ENCODE measurements at regions of chr11 and their contacts with region 1.

Region 1: DNA sequence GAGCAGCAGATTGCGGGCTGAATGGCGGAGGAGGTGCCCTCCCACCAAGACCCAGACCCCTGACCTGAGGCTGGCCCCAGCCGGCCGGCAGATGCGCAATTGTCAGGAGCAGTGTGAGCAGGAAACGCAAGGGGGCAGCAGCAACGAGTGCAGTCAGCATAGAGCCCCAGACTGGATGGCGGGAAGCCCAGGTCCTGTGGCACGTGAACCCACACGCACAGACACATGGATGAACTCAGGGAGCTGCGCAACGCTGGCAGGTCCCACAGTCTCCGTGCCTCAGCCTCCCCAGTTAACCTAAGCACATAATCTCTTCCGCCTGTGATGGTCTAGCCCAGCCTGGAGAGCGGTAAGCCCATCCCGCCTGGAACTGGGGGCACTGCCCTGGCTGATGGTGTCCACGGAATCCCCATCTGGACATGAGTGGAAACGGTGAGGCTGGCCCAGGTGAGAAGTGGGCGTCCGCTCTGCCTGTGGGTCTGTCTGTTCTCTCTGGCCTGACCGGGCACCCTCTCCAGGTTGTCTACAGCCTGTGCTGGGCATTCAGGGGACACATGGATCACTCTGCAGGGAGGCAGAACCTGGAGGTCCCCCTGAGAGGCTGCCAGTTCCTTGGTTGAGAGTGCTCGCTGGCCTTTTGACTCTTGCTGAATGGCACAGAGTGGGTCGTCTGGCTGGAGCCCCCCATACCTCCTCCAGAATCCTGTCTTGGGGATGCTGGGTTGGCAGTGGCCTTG is 626 bp upstream of the TBX10 start:
- DNase-seq: peak; percentile 50
- H3K4me3 Mint-ChIP-seq: no peak overlapping the region
- H3K27ac Mint-ChIP-seq: no peak overlapping the region
- H3K4me1 Mint-ChIP-seq: peaks cover 6% of the 10 kb centered on the region
- H3K27me3 Mint-ChIP-seq: no peaks in the 10 kb centered on the region

Region 2: GRCh38 chr11:67732045-67732787 is 92.0 kb after region 1 on chr11:
- intact Hi-C with region 1: loop called (anchors 10 kb)
- DNase-seq: peak; percentile 12
- H3K4me3 Mint-ChIP-seq: no peak overlapping the region
- H3K27ac Mint-ChIP-seq: no peak overlapping the region
- H3K4me1 Mint-ChIP-seq: peaks cover 12% of the 10 kb centered on the region
- H3K27me3 Mint-ChIP-seq: peaks cover 15% of the 10 kb centered on the region

Measured in activated T-helper 2 cell treated with anti-CD3 and anti-CD28 coated beads, Interferon-gamma antibody, Interleukin-2, Interleukin-4, amounts not matched to agents 10 μg/mL and 5 μg/mL and 100 μg/mL, durations not matched to agents 14 hours and 24 hours and 36 hours (primary cell).